ENCODE measurements at regions of chr1 and their contacts with region 1.

Region 1: GRCh38 chr1:201999625-202000238 is 10.7 kb upstream of the ELF3 start:
- DNase-seq: peak; percentile 30
- H3K4me3 Mint-ChIP-seq: no peak overlapping the region
- H3K27ac Mint-ChIP-seq: no peak overlapping the region
- H3K4me1 Mint-ChIP-seq: no peaks in the 10 kb centered on the region
- H3K27me3 Mint-ChIP-seq: no peaks in the 10 kb centered on the region

Region 2: DNA sequence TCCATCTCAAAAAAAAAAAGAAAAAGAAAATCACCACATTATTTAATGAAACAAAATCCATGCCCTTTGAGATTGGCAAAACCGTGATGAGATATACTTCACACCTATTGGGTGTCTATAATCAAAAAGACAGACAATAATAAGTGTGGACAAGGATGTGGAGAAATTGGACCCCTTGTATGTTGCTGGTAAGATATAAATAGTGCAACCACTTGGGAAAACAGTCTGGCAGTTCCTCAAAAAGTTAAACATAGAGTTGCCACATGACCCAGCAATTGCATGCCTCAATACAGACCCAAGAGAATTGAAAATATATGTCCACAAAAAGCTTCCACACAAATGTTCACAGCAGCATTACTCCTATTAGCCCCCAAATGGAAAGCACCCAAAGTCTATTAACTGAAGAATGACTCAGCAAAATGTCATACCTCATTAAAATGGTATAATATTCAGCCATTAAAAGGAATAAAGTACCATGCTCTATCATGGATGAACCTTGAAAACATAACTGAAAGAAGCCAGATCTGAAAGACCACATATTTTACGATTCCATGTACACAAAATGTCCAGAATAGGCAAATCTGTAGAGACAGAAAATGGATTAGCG is 77.7 kb before region 1 on chr1:
- CTCF ChIA-PET with region 1: no interaction called
- POLR2A ChIA-PET with region 1: no interaction called
- intact Hi-C with region 1: no loop called
- DNase-seq: no peak
- H3K4me3 Mint-ChIP-seq: no peak overlapping the region
- H3K27ac Mint-ChIP-seq: no peak overlapping the region
- H3K4me1 Mint-ChIP-seq: no peaks in the 10 kb centered on the region
- H3K27me3 Mint-ChIP-seq: peaks cover 1% of the 10 kb centered on the region

Region 3: DNA sequence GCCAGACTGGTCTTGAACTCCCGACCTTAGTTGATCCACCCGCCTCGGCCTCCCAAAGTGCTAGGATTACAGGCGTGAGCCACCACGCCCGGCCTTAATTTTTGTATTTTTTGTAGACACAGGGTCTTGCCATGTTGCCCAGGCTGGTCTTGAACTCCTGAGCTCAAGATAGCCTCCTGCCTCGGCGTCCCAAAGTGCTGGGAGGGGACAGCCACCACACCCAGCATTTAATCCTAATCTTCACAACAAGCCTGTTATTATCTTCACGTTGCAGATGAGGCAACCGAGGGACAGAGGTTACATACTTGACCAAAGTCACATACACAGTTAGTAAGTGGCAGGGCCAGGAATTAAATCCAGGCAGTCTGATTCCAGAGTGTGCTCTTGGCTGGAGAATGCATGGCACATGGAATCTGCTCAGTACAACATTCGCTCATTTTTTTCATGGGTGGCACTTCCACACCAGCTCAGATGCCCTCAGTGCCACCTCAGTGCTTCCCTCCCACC is 118.2 kb after region 1 on chr1:
- CTCF ChIA-PET with region 1: interaction called, 25 read pairs
- POLR2A ChIA-PET with region 1: no interaction called
- intact Hi-C with region 1: no loop called
- DNase-seq: no peak
- H3K4me3 Mint-ChIP-seq: no peak overlapping the region
- H3K27ac Mint-ChIP-seq: no peak overlapping the region
- H3K4me1 Mint-ChIP-seq: no peaks in the 10 kb centered on the region
- H3K27me3 Mint-ChIP-seq: no peaks in the 10 kb centered on the region

Region 4: GRCh38 chr1:202135221-202135721 is 135.5 kb after region 1 on chr1:
- CTCF ChIA-PET with region 1: interaction called, 53 read pairs
- POLR2A ChIA-PET with region 1: no interaction called
- intact Hi-C with region 1: no loop called
- DNase-seq: peak; percentile 62
- H3K4me3 Mint-ChIP-seq: no peak overlapping the region
- H3K27ac Mint-ChIP-seq: no peak overlapping the region
- H3K4me1 Mint-ChIP-seq: no peaks in the 10 kb centered on the region
- H3K27me3 Mint-ChIP-seq: no peaks in the 10 kb centered on the region